A549 (cell line): ENCODE measurements at regions of chr11 and their contacts with region 1.

Region 1: GRCh38 chr11:62394825-62395538 is 23.9 kb upstream of the SCGB1A1 start:
- DNase-seq: peak; percentile 83 to 93
- ATAC-seq: peak; percentile 82 to 84
- H3K4me3 ChIP-seq: peak overlapping the region; percentile 8; the same call in 1 of the 3 replicates
- H3K27ac ChIP-seq: peak overlapping the region; percentile 65 to 76
- H3K4me1 ChIP-seq: peaks cover 37% of the 10 kb centered on the region
- CTCF ChIP-seq: peak; percentile 91
- EP300 ChIP-seq: no peak
- POLR2A ChIP-seq: no peak
- RAD21 ChIP-seq: peak; percentile 93

Region 2: GRCh38 chr11:62411524-62411923 is 16.5 kb after region 1 on chr11:
- CTCF ChIA-PET with region 1: interaction called, 86 read pairs
- POLR2A ChIA-PET with region 1: no interaction called
- DNase-seq: no peak
- ATAC-seq: no peak
- H3K4me3 ChIP-seq: no peak overlapping the region
- H3K27ac ChIP-seq: peak overlapping the region in 1 of 2 experiments; percentile 11; a peak in 1 of 6 replicates
- H3K4me1 ChIP-seq: peaks cover 9% of the 10 kb centered on the region; the same call in 2 of the 3 replicates
- CTCF ChIP-seq: no peak
- EP300 ChIP-seq: no peak
- POLR2A ChIP-seq: no peak
- RAD21 ChIP-seq: no peak

Region 3: DNA sequence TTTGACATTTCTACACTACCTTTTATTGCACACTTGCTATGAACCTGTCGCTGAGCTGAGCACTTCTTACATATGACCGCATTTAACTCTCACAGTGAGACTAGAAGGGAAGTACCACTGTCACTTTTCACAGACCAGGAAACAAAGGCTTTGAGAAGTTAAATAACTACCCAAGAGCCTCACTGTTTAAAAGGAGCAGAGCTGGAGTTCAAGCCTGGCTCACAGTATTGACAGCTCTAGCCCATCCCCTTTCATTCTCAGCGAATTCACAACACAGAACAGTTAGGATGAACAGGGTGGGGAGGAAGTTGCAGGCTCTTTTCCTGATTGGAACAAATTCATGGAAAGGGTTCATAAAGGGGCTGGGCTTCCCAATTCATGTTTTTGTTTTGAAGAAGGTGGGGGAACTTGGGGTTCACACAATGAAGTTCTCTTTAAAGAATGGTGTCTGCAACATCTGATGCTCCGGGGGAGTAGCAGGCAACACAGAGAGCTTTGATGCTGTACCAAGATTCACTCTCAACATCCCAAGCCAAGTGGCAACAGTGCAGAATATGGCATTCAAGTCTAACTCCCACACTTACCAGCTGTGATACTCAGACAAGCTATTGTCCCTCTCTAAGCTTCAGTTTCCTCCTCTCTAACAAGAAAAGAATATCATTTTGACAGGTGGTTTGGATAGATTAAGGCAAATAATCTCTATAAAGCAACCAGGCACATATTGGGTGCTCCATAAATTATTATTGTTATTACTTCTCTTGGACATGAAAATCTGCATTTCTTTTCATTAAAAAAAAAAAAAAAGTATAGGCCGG is 41.1 kb after region 1 on chr11:
- CTCF ChIA-PET with region 1: interaction called, 17 read pairs
- POLR2A ChIA-PET with region 1: no interaction called
- DNase-seq: no peak
- ATAC-seq: no peak
- H3K4me3 ChIP-seq: no peak overlapping the region
- H3K27ac ChIP-seq: no peak overlapping the region
- H3K4me1 ChIP-seq: peaks cover 33% of the 10 kb centered on the region
- CTCF ChIP-seq: no peak
- EP300 ChIP-seq: no peak
- POLR2A ChIP-seq: no peak
- RAD21 ChIP-seq: no peak

Region 4: DNA sequence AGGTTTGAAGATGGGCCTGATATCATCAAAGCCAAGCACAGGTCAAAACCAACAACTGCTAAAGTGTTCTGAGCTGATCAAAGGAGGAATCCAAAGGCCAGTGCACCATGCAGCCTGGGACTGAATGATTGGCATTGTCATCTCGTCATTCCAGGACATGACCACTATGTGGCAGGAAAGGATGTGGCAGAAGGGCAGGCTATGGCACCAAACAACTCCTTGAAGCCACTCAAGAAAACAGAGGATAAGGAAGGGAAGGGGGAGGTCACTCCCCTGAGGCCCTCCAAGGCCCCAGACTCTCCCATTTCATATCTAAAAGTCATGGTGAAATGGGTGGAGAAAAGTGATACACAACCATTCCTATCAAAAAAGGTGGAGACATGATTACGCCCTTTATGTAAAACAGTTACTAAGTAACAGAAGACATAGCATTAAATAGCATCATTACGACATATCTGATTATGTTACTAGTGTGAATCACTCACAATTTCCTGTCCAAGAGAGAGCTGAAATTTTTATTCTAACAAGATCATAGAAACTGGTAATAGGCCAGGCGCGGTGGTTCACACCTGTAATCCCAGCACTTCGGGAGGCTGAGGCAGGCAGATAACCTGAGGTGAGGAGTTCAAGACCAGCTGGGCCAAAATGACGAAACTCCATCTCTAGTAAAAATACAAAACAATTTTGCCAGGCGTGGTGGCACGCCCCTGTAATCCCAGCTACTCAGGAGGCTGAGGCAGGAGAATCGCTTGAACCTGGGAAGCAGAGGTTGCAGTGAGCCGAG is 102.3 kb after region 1 on chr11:
- CTCF ChIA-PET with region 1: interaction called, 17 read pairs
- POLR2A ChIA-PET with region 1: no interaction called
- DNase-seq: peak; percentile 75 to 85
- ATAC-seq: peak; percentile 91 to 96
- H3K4me3 ChIP-seq: no peak overlapping the region
- H3K27ac ChIP-seq: peak overlapping the region; percentile 21 to 65; a peak in 4 of 6 replicates
- H3K4me1 ChIP-seq: peaks cover 29% of the 10 kb centered on the region
- CTCF ChIP-seq: peak; percentile 71
- EP300 ChIP-seq: no peak
- POLR2A ChIP-seq: no peak
- RAD21 ChIP-seq: peak; percentile 82 to 84

Region 5: GRCh38 chr11:62542750-62543567 is 148.0 kb after region 1 on chr11:
- CTCF ChIA-PET with region 1: interaction called, 201 read pairs
- POLR2A ChIA-PET with region 1: interaction called, 7 read pairs
- DNase-seq: peak; percentile 72 to 82
- ATAC-seq: peak; percentile 11 to 46; a peak in 5 of 6 replicates
- H3K4me3 ChIP-seq: peak overlapping the region; percentile 96
- H3K27ac ChIP-seq: peak overlapping the region; percentile 97 to 98
- H3K4me1 ChIP-seq: peaks cover 75% of the 10 kb centered on the region
- CTCF ChIP-seq: peak; percentile 87
- EP300 ChIP-seq: no peak
- POLR2A ChIP-seq: no peak
- RAD21 ChIP-seq: peak; percentile 92 to 95

Region 6: DNA sequence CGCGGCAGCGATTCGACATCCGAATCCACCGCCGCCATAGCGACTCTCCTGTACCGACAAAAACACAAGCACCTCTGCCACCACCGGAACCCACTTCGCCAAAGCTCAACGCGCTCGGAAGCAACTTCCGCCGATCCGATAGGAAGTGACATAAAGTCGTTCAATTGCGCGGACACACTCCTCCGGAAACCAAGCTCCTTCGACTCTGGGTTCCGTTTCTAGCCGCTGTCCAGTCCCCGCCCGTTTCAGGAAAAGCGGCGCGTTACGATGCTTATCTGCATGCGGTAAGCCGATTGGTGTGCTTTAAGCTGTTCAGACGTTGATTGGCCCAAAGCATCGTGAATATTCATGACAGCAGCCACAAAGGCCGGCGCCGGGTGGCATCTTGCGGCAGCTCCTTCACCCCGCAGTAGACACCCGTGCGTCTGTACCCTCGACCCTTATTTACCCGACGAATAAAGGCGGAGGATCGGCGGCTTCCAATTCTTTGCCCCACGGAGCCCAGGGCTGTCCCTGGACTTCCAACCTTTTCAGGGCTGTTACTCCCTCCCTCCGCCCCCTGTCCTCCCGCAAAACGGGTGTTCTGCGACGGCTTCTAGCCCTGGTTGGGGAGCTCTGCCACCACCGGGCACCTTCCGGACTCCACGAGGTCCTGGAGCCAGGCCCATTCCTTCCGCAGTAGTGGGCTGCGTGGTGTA is 196.6 kb after region 1 on chr11 and contains the start of gene TUT1:
- CTCF ChIA-PET with region 1: interaction called, 18 read pairs
- POLR2A ChIA-PET with region 1: interaction called, 12 read pairs
- DNase-seq: peak; percentile 96 to 100
- ATAC-seq: peak; percentile 89 to 95
- H3K4me3 ChIP-seq: peak within 1 kb of the TSS; percentile 79
- H3K27ac ChIP-seq: peak within 1 kb of the TSS; percentile 90 to 91
- H3K4me1 ChIP-seq: peaks cover 49% of the 10 kb centered on the region
- CTCF ChIP-seq: no peak
- EP300 ChIP-seq: no peak
- POLR2A ChIP-seq: peak; percentile 87
- RAD21 ChIP-seq: no peak; a peak in 1 of 5 replicates
- polyA plus RNA-seq, gene TUT1: 12.9 and 15.5 TPM in 2 replicates

Region 7: DNA sequence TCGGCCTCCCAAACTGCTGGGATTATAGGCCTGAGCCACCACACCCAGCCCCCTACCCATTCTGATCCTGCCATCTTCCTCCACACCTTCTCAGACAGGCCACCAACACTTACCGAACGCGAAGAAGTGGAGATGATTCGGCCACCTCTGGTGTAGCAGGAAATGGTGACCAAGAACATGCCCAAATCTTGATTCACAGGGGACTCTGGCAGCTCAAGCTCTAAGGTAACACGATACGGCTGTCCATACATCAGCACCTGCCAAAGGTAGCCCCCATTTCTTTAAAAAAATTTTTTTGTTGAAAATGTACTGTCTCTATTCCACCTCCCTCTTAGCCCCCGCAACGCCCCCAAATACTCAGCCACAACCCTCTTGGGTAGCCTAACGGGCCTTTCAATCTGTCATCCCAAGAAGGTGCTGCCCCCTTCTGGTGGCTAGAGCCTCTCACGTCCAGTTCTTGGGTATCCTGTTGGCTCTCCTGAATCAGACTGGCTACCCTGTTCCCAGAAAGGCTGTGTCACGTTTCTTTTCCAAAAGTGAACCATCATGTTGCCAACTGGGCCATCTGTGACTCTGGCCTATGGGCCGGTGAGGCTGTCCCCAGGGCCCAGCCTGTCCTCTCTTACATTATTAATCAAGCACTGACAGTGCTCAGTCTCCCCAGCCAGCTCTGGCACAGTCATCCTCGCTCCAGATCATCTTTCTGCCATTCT is 299.6 kb after region 1 on chr11:
- CTCF ChIA-PET with region 1: interaction called, 13 read pairs
- POLR2A ChIA-PET with region 1: no interaction called
- DNase-seq: peak; percentile 68 to 87
- ATAC-seq: peak; percentile 75 to 88
- H3K4me3 ChIP-seq: no peak overlapping the region
- H3K27ac ChIP-seq: no peak overlapping the region
- H3K4me1 ChIP-seq: peaks cover 2% of the 10 kb centered on the region; the same call in 1 of the 3 replicates
- CTCF ChIP-seq: peak; percentile 61
- EP300 ChIP-seq: no peak
- POLR2A ChIP-seq: no peak
- RAD21 ChIP-seq: peak; percentile 52 to 63